Panc1 (cell line): ENCODE measurements at regions of chr5 and their contacts with region 1.

Region 1: DNA sequence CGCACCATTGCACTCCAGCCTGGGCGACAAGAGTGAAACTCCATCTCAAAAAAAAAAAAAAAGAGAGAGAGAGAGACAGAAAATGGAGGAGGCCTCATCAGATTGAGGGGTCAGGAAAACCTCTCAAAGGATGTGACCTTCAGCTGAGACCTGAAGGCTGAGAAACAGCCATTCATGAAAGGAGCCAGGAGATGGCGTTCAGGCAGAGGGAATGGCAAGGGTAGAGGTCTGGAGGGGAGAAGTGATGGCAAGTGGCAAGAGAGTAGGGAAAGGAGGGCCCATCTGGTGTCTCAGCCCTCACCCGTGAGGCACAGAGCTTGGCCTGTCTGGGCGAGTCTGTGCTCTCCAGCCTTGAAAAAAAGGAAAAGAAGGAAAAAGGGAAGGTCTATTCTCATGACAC is 17.0 kb downstream of the CAMK2A start:
- DNase-seq: peak; percentile 24
- ATAC-seq: peak; percentile 86
- H3K4me3 ChIP-seq: no peak overlapping the region
- H3K27ac ChIP-seq: no peak overlapping the region
- H3K4me1 ChIP-seq: no peaks in the 10 kb centered on the region; the same call in 1 of the 2 replicates
- H3K27me3 ChIP-seq: no peaks in the 10 kb centered on the region
- CTCF ChIP-seq: no peak

Region 2: DNA sequence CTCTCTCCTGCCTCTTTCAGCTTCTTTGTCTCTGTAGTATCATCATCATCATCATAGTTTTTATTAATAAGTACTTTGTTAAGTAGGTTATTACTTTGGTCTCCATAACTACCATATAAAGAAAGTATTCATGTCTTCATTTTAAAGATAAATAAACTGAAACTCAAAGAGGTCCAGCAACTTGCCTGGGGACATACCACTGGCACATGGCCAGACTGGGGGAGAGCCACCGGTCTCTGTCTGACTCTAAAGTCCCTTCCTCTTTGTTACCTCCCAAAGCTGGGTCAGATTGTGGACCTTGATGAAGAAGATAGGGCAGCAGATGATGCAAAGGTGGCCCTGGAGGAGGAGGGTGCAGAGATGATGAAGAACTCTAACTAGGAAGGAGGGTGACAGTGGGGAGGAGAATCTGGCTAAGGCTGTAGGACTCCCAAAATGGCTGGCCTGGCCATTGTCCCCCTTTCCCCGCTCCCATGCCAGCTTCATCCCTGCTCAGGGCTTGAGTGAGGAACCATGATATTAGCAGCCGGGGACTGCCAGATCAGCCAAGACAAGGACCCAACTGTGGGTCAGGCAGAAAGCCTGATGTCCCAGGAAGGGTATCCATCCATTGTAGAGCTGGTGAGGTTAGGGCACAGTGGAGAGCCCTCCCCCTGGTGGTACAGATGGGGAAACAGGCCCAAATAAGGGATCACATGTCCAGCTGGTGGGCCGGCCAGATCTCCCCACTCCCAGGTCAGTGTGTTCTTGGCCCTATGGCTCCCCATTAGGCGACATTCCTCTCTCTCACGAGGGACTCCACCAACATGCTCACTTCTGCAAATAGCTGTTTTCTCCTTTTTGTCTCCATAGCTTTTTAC is 97.2 kb before region 1 on chr5:
- CTCF ChIA-PET with region 1: no interaction called
- POLR2A ChIA-PET with region 1: no interaction called
- in situ Hi-C with region 1: no loop called
- intact Hi-C with region 1: no loop called
- DNase-seq: no peak
- ATAC-seq: peak; percentile 59
- H3K4me3 ChIP-seq: no peak overlapping the region
- H3K27ac ChIP-seq: no peak overlapping the region
- H3K4me1 ChIP-seq: no peaks in the 10 kb centered on the region
- H3K27me3 ChIP-seq: no peaks in the 10 kb centered on the region; the same call in 1 of the 2 replicates
- CTCF ChIP-seq: no peak; the same call in 1 of the 2 replicates

Region 3: GRCh38 chr5:150340614-150341255 is 68.2 kb after region 1 on chr5:
- CTCF ChIA-PET with region 1: no interaction called
- POLR2A ChIA-PET with region 1: no interaction called
- in situ Hi-C with region 1: no loop called
- intact Hi-C with region 1: loop called (anchors 1 kb)
- DNase-seq: no peak
- ATAC-seq: peak; percentile 19; the same call in 1 of the 2 replicates
- H3K4me3 ChIP-seq: no peak overlapping the region
- H3K27ac ChIP-seq: no peak overlapping the region
- H3K4me1 ChIP-seq: no peaks in the 10 kb centered on the region; the same call in 1 of the 2 replicates
- H3K27me3 ChIP-seq: no peaks in the 10 kb centered on the region
- CTCF ChIP-seq: no peak

Region 4: DNA sequence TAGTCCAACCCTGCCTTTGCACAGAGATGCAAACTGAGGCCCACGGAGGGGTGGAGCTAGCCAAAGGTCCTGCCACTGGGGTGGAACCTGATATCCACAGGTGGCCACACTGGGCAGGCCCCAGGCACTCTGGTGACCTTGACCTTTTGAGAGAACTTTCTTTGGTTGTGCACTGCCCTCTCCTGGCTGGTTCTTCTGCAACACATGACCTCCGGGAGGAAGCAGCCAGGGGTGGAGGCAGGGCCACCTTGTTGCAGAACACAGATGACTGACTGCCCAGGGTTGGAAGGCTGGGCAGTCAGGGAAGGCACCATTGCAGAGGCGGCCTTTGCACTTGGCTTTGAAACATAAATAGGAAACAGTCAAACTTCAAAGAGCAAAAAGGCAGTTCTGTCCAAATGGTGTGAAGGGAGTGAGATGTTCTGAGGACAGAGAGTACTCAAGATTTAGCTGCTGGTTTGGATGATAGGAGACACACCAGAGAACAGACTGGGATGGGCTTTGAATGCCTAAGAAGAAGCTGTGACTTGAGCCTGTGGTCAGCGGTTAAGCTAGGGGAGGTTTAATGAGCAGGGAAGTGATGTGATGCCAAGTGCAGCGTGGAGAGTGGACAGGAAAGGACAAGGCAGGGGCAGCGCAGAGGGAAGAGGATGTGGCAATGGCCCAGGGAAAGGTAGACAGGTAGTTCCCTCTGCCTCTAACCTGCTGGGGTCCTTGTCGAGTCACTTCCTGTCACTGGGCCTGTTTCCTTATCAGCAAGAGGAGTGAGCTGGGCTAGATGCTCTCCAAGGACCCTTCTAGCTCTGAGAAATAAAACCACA is 78.2 kb after region 1 on chr5:
- CTCF ChIA-PET with region 1: interaction called, 4 read pairs
- POLR2A ChIA-PET with region 1: no interaction called
- in situ Hi-C with region 1: no loop called
- intact Hi-C with region 1: loop called (anchors 1 kb)
- DNase-seq: peak; percentile 77
- ATAC-seq: peak; percentile 93
- H3K4me3 ChIP-seq: no peak overlapping the region
- H3K27ac ChIP-seq: peak overlapping the region; percentile 32; the same call in 1 of the 2 replicates
- H3K4me1 ChIP-seq: peaks cover 17% of the 10 kb centered on the region
- H3K27me3 ChIP-seq: no peaks in the 10 kb centered on the region
- CTCF ChIP-seq: peak; percentile 85